Naive thymus-derived CD4-positive, alpha-beta T cell (primary cell): ENCODE measurements at regions of chr10 and their contacts with region 1.

Region 1: GRCh38 chr10:7687228-7687907 is 15.7 kb upstream of the ITIH2 start:
- DNase-seq: peak; percentile 30 to 82 (median 76)
- ATAC-seq: peak; percentile 96
- H3K4me3 ChIP-seq: no peak overlapping the region
- H3K4me3 Mint-ChIP-seq: peak overlapping the region in 1 of 10 donors; percentile 67
- H3K27ac ChIP-seq: no peak overlapping the region
- H3K27ac Mint-ChIP-seq: peak overlapping the region in 2 of 9 donors; percentile 15 to 28
- H3K4me1 ChIP-seq: no peaks in the 10 kb centered on the region
- H3K4me1 Mint-ChIP-seq: peaks cover 0 to 14% (median 4%) of the 10 kb centered on the region in 7 donors
- H3K27me3 ChIP-seq: no peaks in the 10 kb centered on the region
- H3K27me3 Mint-ChIP-seq: peaks cover 0 to 24% (median 0%) of the 10 kb centered on the region in 5 donors

Region 2: DNA sequence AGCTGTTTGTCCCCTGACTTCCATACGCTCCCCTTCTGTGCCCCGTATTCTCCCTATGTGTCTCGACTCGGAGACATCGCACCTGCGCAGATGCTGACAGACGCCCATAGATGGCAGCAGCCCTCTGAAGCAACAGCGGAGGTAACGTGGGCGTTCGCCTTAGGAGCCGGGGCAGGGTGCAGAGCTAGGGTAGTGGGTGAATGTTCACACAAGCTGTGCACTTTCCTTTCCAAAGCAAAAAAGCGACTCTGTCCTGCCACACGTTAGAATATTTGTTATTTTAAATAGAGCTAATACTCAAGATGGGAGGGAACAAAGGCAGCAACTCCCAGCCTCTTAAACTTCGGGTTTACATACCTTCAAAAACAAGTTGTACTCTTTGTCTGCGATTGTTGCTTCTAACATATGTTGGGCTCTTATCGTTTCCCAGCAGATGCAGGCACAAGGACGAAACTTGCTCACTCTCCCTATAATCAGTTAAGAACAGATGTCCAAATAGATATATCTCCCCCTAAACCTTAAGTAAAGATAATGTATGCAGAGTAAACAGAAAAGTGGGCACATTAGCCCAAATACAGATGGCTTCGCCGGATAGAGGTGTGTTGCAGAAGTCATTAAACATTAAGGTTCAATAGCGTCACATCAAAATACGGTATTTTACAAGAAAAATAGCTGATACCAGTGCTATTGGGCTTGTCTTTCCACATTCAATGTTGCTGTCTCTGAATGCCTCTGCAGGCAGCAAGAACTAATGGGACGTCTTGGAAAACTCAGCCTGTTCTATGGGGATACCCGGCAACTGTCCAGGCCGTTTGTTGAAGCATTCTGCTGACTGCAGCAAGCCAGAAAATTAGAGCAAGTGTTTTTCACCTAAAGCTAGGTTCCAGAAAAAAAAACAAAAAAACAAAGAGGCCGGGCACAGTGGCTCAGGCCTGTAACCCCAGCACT is 767.0 kb before region 1 on chr10:
- CTCF ChIA-PET with region 1: interaction called, 17 read pairs
- POLR2A ChIA-PET with region 1: no interaction called
- intact Hi-C with region 1: loop called (anchors 1 kb)
- DNase-seq: peak; percentile 47 to 74 (median 69)
- ATAC-seq: peak; percentile 97
- H3K4me3 ChIP-seq: no peak overlapping the region
- H3K4me3 Mint-ChIP-seq: peak overlapping the region in 7 of 10 donors; percentile 13 to 45 (median 26)
- H3K27ac ChIP-seq: no peak overlapping the region
- H3K27ac Mint-ChIP-seq: no peak overlapping the region
- H3K4me1 ChIP-seq: peaks cover 0 to 21% of the 10 kb centered on the region in 2 donors
- H3K4me1 Mint-ChIP-seq: peaks cover 0 to 25% (median 12%) of the 10 kb centered on the region in 7 donors
- H3K27me3 ChIP-seq: no peaks in the 10 kb centered on the region
- H3K27me3 Mint-ChIP-seq: peaks cover 0 to 14% (median 5%) of the 10 kb centered on the region in 5 donors

Region 3: DNA sequence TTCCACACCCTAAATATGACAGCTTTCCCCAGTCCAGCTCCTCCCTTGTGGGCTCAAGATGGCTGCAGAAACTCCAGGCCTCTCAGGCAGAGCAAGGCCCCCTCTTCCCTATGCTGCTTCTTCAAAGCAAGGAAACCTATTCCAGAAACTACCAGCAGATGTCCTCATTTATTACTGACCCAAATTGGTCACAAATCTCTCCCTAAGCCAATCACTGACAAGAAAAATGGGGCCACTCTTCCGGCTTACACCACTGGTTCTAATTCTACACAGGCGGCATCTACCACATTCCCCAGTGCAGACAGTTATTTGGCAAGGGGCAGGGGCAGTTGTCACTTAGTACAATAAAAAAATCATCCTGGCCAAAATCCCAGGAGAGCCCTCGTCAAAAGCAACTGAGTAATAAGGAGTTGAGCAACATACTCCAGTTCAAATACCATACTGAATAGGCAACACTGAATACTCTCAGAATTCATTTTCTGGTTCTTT is 426.9 kb before region 1 on chr10:
- CTCF ChIA-PET with region 1: no interaction called
- POLR2A ChIA-PET with region 1: no interaction called
- intact Hi-C with region 1: loop called in 1 of 2 experiments (anchors 1 kb)
- DNase-seq: peak in 3 of 9 donors; percentile 16 to 33 (median 31)
- ATAC-seq: peak; percentile 73
- H3K4me3 ChIP-seq: no peak overlapping the region
- H3K4me3 Mint-ChIP-seq: peak overlapping the region in 8 of 10 donors; percentile 29 to 75 (median 61)
- H3K27ac ChIP-seq: no peak overlapping the region
- H3K27ac Mint-ChIP-seq: peak overlapping the region; percentile 51 to 94 (median 86)
- H3K4me1 ChIP-seq: peaks cover 27 to 30% of the 10 kb centered on the region in 2 donors
- H3K4me1 Mint-ChIP-seq: peaks cover 42 to 64% (median 57%) of the 10 kb centered on the region in 7 donors
- H3K27me3 ChIP-seq: no peaks in the 10 kb centered on the region
- H3K27me3 Mint-ChIP-seq: no peaks in the 10 kb centered on the region

Region 4: GRCh38 chr10:7424315-7424714 is 263.1 kb before region 1 on chr10:
- CTCF ChIA-PET with region 1: interaction called, 12 read pairs
- POLR2A ChIA-PET with region 1: no interaction called
- intact Hi-C with region 1: loop called (anchors 1 to 10 kb)
- DNase-seq: peak in 1 of 9 donors; percentile 16
- ATAC-seq: peak; percentile 65
- H3K4me3 ChIP-seq: no peak overlapping the region
- H3K4me3 Mint-ChIP-seq: no peak overlapping the region
- H3K27ac ChIP-seq: no peak overlapping the region
- H3K27ac Mint-ChIP-seq: peak overlapping the region in 4 of 9 donors; percentile 6 to 47 (median 23)
- H3K4me1 ChIP-seq: no peaks in the 10 kb centered on the region
- H3K4me1 Mint-ChIP-seq: peaks cover 5 to 24% (median 18%) of the 10 kb centered on the region in 7 donors
- H3K27me3 ChIP-seq: no peaks in the 10 kb centered on the region
- H3K27me3 Mint-ChIP-seq: peaks cover 0 to 34% (median 0%) of the 10 kb centered on the region in 5 donors

Region 5: DNA sequence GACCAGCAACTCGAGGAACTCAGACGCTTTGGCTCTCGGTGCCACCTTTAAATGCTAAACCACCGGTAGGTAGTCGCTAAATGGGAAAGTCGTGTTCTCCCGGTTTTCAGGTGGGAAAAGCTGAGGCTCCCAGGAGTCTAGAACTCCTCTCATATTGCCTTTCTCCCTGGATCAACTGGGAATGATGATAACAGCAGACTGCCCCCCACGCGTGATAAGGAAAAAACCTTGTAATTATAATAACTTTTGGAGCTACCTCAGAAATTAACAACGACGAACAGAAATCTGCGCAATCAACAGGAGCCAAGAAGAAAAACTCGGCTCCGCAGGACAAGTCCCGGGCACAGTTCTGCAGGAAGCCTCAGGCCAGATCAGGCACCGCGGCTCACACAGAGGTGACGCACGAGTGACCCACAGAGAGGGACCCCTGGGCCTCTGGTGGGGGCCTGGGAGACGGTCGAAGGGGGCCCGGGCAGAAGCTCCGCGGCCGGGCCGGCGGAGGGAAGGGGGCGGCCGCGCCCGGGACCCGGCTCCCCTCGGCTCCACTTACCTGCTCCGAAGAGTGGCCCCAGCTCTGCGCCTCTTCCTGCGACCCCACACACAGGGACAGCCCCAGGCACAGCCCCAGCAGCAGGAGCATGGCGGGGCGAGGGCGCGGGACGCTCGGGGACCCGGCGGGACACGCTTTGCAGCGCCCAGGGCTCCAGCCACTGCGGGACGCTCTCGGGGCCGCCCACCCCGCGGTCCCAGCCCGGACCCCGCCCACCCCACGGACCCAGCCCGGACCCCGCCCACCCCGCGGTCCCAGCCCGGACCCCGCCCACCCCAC is 20.9 kb before region 1 on chr10 and contains the start of gene ITIH5:
- CTCF ChIA-PET with region 1: interaction called, 3 read pairs
- POLR2A ChIA-PET with region 1: no interaction called
- intact Hi-C with region 1: loop called in 1 of 2 experiments (anchors 2 kb)
- DNase-seq: peak in 4 of 9 donors; percentile 2 to 9 (median 3)
- ATAC-seq: no peak
- H3K4me3 ChIP-seq: peak within 1 kb of the TSS; percentile 2
- H3K4me3 Mint-ChIP-seq: peak within 1 kb of the TSS; percentile 65 to 91 (median 84)
- H3K27ac ChIP-seq: no peak within 1 kb of the TSS
- H3K27ac Mint-ChIP-seq: peak within 1 kb of the TSS in 2 of 9 donors; percentile 53 to 60
- H3K4me1 ChIP-seq: peaks cover 7 to 14% of the 10 kb centered on the region in 2 donors
- H3K4me1 Mint-ChIP-seq: peaks cover 6 to 23% (median 21%) of the 10 kb centered on the region in 7 donors
- H3K27me3 ChIP-seq: peaks cover 9 to 13% of the 10 kb centered on the region in 2 donors
- H3K27me3 Mint-ChIP-seq: peaks cover 52 to 74% (median 64%) of the 10 kb centered on the region in 5 donors
- total RNA-seq, gene ITIH5: not detected